Heart left ventricle (tissue), 16 donors: ENCODE measurements at regions of chr1 and their contacts with region 1.

Region 1: DNA sequence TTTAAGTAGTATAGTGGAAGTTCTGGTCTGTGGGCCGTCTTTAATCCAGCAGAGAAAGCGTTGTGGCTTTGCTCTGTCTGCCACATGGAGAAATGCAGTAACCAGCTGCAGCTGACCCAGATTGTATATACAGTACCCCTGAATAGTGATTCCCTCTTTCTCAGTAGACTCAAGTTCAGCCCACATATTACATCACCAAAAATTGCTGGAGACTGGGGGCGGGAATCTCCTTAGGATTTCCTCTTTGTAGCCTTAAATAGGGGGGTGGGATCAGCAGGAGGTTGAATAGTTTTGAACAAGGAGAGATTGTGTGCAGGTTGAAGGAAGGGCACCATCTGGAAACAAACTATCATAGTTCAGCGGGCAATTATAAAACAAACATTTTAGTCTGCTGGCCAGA is at the start of gene ANGPTL1:
- DNase-seq: peak in 1 of 5 donors; percentile 17
- ATAC-seq: peak in 3 of 4 donors; percentile 24 to 50 (median 44)
- H3K4me3 ChIP-seq: peak within 1 kb of the TSS in 10 of 12 donors; percentile 6 to 54 (median 45)
- H3K27ac ChIP-seq: peak within 1 kb of the TSS in 10 of 12 donors; percentile 6 to 67 (median 39)
- H3K4me1 ChIP-seq: peaks cover 0 to 37% (median 17%) of the 10 kb centered on the region in 12 donors
- H3K27me3 ChIP-seq: no peaks in the 10 kb centered on the region
- CTCF ChIP-seq: no peak
- POLR2A ChIP-seq: no peak
- total RNA-seq, gene ANGPTL1: 7.9 to 31.1 (median 17.6) TPM

Region 2: GRCh38 chr1:178931858-178932551 is 61.1 kb after region 1 on chr1:
- intact Hi-C with region 1: loop called in 4 of 10 experiments (anchors 2 to 5 kb)
- DNase-seq: peak; percentile 28 to 83 (median 79)
- ATAC-seq: peak; percentile 90 to 96 (median 93)
- H3K4me3 ChIP-seq: no peak overlapping the region
- H3K27ac ChIP-seq: peak overlapping the region; percentile 62 to 92 (median 81)
- H3K4me1 ChIP-seq: peaks cover 0 to 65% (median 33%) of the 10 kb centered on the region in 12 donors
- H3K27me3 ChIP-seq: no peaks in the 10 kb centered on the region
- CTCF ChIP-seq: no peak
- POLR2A ChIP-seq: no peak